A673 (cell line): ENCODE measurements at regions of chr10 and their contacts with region 1.

Region 1: DNA sequence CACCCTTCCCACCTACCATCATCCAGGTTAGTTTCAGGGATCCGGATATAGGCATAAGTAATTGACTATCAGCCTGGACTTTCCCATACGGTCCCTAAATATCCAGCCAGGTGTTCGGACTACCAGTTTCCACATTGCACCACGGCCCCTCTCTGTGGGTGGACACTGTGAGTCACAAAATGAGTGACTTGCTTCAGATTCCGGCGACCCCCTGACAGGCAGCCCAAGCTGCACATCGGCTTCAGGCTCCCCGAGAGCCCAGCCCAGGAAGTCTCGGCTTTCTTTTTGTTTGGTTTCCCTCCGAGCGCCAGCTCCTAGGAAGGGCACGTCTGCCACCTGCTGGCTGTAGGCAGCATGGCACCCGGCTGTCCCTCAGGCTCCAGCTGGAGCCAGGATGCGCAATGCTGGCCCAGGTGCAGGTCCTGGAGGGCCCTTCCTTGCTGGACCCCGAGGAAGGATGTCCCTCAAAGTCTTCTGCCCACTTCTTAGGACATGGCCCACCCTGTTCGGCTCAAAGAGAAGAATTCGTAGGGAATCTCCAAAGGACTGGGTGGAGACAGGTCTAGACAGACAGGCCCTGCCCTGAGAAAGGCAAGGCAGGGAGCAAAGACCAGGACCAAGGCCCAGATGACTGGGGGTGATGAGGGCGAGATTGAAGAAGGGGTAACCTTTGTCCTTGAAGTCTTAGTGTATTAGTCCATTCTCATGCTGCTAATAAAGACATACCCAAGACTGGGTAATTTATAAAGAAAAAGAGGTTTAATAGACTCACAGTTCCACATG is 10.6 kb downstream of the HABP2 start:
- DNase-seq: peak; percentile 85
- H3K4me3 ChIP-seq: peak overlapping the region; percentile 33
- H3K27ac ChIP-seq: no peak overlapping the region
- H3K4me1 ChIP-seq: no peaks in the 10 kb centered on the region
- H3K27me3 ChIP-seq: no peaks in the 10 kb centered on the region
- CTCF ChIP-seq: peak; percentile 98

Region 2: DNA sequence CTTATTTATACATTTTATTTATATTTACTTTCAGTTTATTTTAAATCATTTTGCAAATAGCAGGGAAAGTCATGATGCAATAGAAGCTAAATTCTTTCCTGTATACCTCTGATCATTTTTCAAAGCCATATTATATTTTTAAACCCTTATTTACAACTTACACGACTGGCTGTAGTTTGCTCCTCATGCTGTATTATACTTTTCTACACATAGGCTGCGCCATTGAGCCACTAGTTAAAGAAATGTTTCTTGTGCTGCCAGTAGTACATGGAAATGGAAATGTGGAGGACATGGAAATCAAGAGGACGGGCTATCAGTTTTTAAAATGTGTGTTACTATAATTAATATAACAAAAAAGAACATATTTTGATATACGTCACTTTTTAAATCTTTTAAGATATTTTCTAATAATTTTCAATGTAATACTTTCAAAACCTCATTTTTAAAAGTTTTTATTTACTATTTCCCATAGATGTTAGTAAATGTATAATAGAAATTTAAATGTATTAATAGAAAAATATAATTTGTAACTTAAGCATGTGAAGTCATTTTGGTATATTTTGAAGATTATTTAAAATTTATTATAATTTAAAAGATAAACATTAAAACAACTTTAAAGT is 998.0 kb before region 1 on chr10:
- CTCF ChIA-PET with region 1: no interaction called
- POLR2A ChIA-PET with region 1: no interaction called
- intact Hi-C with region 1: loop called (anchors 10 kb)
- DNase-seq: peak; percentile 79
- H3K4me3 ChIP-seq: no peak overlapping the region
- H3K27ac ChIP-seq: no peak overlapping the region
- H3K4me1 ChIP-seq: no peaks in the 10 kb centered on the region
- H3K27me3 ChIP-seq: no peaks in the 10 kb centered on the region
- CTCF ChIP-seq: peak; percentile 78

Region 3: GRCh38 chr10:113139699-113140098 is 423.8 kb before region 1 on chr10:
- CTCF ChIA-PET with region 1: no interaction called
- POLR2A ChIA-PET with region 1: no interaction called
- intact Hi-C with region 1: loop called (anchors 10 kb)
- DNase-seq: peak; percentile 87
- H3K4me3 ChIP-seq: no peak overlapping the region
- H3K27ac ChIP-seq: no peak overlapping the region
- H3K4me1 ChIP-seq: peaks cover 19% of the 10 kb centered on the region
- H3K27me3 ChIP-seq: no peaks in the 10 kb centered on the region
- CTCF ChIP-seq: peak; percentile 70

Region 4: GRCh38 chr10:113454341-113455061 is 109.0 kb before region 1 on chr10:
- CTCF ChIA-PET with region 1: no interaction called
- POLR2A ChIA-PET with region 1: no interaction called
- intact Hi-C with region 1: loop called (anchors 5 kb)
- DNase-seq: peak; percentile 51
- H3K4me3 ChIP-seq: no peak overlapping the region
- H3K27ac ChIP-seq: no peak overlapping the region
- H3K4me1 ChIP-seq: no peaks in the 10 kb centered on the region
- H3K27me3 ChIP-seq: peaks cover 26% of the 10 kb centered on the region
- CTCF ChIP-seq: peak; percentile 89

Region 5: GRCh38 chr10:113521123-113521795 is 42.2 kb before region 1 on chr10:
- CTCF ChIA-PET with region 1: interaction called, 5 read pairs
- POLR2A ChIA-PET with region 1: no interaction called
- intact Hi-C with region 1: loop called (anchors 5 kb)
- DNase-seq: peak; percentile 79
- H3K4me3 ChIP-seq: no peak overlapping the region
- H3K27ac ChIP-seq: no peak overlapping the region
- H3K4me1 ChIP-seq: no peaks in the 10 kb centered on the region
- H3K27me3 ChIP-seq: no peaks in the 10 kb centered on the region
- CTCF ChIP-seq: peak; percentile 94